ENCODE measurements at regions of chr22 and their contacts with region 1.

Region 1: GRCh38 chr22:22103078-22103875 is 120.7 kb upstream of the TOP3B start:
- DNase-seq: no peak
- ATAC-seq: 0 out of 3 replicates have a peak, but pooled peaks have one; percentile 18
- H3K4me3 ChIP-seq: no peak overlapping the region
- H3K27ac ChIP-seq: no peak overlapping the region
- H3K4me1 ChIP-seq: peaks cover 9% of the 10 kb centered on the region
- H3K27me3 ChIP-seq: no peaks in the 10 kb centered on the region
- CTCF ChIP-seq: peak; percentile 17 to 60 (median 30); a peak in 5 of 6 replicates
- EP300 ChIP-seq: no peak
- POLR2A ChIP-seq: no peak
- RAD21 ChIP-seq: no peak

Region 2: GRCh38 chr22:21098099-21098671 is 1005.1 kb before region 1 on chr22:
- CTCF ChIA-PET with region 1: no interaction called
- POLR2A ChIA-PET with region 1: interaction called, 10 read pairs
- RAD21 ChIA-PET with region 1: no interaction called
- SMC1A ChIA-PET with region 1: no interaction called
- in situ Hi-C with region 1: no loop called
- intact Hi-C with region 1: no loop called
- DNase-seq: no peak
- ATAC-seq: no peak; the same call in 2 of the 3 replicates
- H3K4me3 ChIP-seq: no peak overlapping the region
- H3K27ac ChIP-seq: no peak overlapping the region
- H3K4me1 ChIP-seq: no peaks in the 10 kb centered on the region
- H3K27me3 ChIP-seq: no peaks in the 10 kb centered on the region
- CTCF ChIP-seq: peak in 2 of 3 experiments; percentile 15 to 29; a peak in 2 of 6 replicates
- EP300 ChIP-seq: no peak
- POLR2A ChIP-seq: no peak
- RAD21 ChIP-seq: peak; percentile 19; the same call in 1 of the 2 replicates

Region 3: GRCh38 chr22:22003233-22003632 is 100.0 kb before region 1 on chr22:
- CTCF ChIA-PET with region 1: no interaction called
- POLR2A ChIA-PET with region 1: no interaction called
- RAD21 ChIA-PET with region 1: no interaction called
- SMC1A ChIA-PET with region 1: no interaction called
- in situ Hi-C with region 1: no loop called
- intact Hi-C with region 1: no loop called
- DNase-seq: no peak
- ATAC-seq: no peak
- H3K4me3 ChIP-seq: no peak overlapping the region
- H3K27ac ChIP-seq: no peak overlapping the region
- H3K4me1 ChIP-seq: no peaks in the 10 kb centered on the region
- H3K27me3 ChIP-seq: no peaks in the 10 kb centered on the region; a peak in 1 of 4 replicates
- CTCF ChIP-seq: no peak
- EP300 ChIP-seq: no peak
- POLR2A ChIP-seq: no peak
- RAD21 ChIP-seq: no peak

Region 4: DNA sequence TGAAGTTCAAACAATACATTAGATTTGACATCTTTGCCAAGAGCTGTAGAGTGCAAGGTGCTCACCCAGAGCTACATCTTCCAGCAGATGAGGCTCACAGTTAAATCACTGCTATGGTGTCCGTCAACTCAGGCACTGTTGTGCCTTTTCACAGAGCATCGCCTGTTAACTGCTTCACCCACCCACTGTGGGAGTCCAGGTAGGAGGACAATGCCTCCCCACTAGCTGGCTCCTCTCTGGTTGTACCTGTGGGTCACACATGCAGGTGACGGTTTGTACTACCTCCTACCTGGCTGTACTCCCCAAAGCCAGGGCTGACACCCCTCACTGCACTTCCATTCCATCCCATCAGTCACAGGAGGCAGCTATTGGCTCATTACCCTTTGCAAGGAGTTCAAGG is 36.1 kb before region 1 on chr22:
- CTCF ChIA-PET with region 1: interaction called, 104 read pairs
- POLR2A ChIA-PET with region 1: interaction called, 3 read pairs
- RAD21 ChIA-PET with region 1: interaction called, 50 read pairs
- SMC1A ChIA-PET with region 1: interaction called, 70 read pairs
- in situ Hi-C with region 1: no loop called
- intact Hi-C with region 1: no loop called
- DNase-seq: no peak
- ATAC-seq: no peak
- H3K4me3 ChIP-seq: no peak overlapping the region
- H3K27ac ChIP-seq: no peak overlapping the region
- H3K4me1 ChIP-seq: peaks cover 12% of the 10 kb centered on the region
- H3K27me3 ChIP-seq: no peaks in the 10 kb centered on the region
- CTCF ChIP-seq: no peak
- EP300 ChIP-seq: no peak
- POLR2A ChIP-seq: no peak
- RAD21 ChIP-seq: no peak

Region 5: GRCh38 chr22:22085702-22086500 is 17.4 kb before region 1 on chr22:
- CTCF ChIA-PET with region 1: interaction called, 6 read pairs
- POLR2A ChIA-PET with region 1: no interaction called
- RAD21 ChIA-PET with region 1: interaction called, 12 read pairs
- SMC1A ChIA-PET with region 1: interaction called, 27 read pairs
- in situ Hi-C with region 1: no loop called
- intact Hi-C with region 1: no loop called
- DNase-seq: no peak
- ATAC-seq: no peak
- H3K4me3 ChIP-seq: no peak overlapping the region
- H3K27ac ChIP-seq: no peak overlapping the region
- H3K4me1 ChIP-seq: no peaks in the 10 kb centered on the region
- H3K27me3 ChIP-seq: no peaks in the 10 kb centered on the region
- CTCF ChIP-seq: no peak
- EP300 ChIP-seq: no peak
- POLR2A ChIP-seq: no peak
- RAD21 ChIP-seq: no peak

Region 6: GRCh38 chr22:22138915-22139314 is 35.6 kb after region 1 on chr22:
- CTCF ChIA-PET with region 1: interaction called, 13 read pairs
- POLR2A ChIA-PET with region 1: no interaction called
- RAD21 ChIA-PET with region 1: interaction called, 3 read pairs
- SMC1A ChIA-PET with region 1: interaction called, 55 read pairs
- in situ Hi-C with region 1: no loop called
- intact Hi-C with region 1: no loop called
- DNase-seq: no peak
- ATAC-seq: no peak
- H3K4me3 ChIP-seq: no peak overlapping the region
- H3K27ac ChIP-seq: no peak overlapping the region
- H3K4me1 ChIP-seq: no peaks in the 10 kb centered on the region
- H3K27me3 ChIP-seq: no peaks in the 10 kb centered on the region
- CTCF ChIP-seq: no peak
- EP300 ChIP-seq: no peak
- POLR2A ChIP-seq: no peak
- RAD21 ChIP-seq: no peak

Region 7: GRCh38 chr22:22935546-22936157 is 832.4 kb after region 1 on chr22:
- CTCF ChIA-PET with region 1: no interaction called
- POLR2A ChIA-PET with region 1: interaction called, 3 read pairs
- RAD21 ChIA-PET with region 1: interaction called, 13 read pairs
- SMC1A ChIA-PET with region 1: no interaction called
- in situ Hi-C with region 1: no loop called
- intact Hi-C with region 1: no loop called
- DNase-seq: peak; percentile 99
- ATAC-seq: peak; percentile 84
- H3K4me3 ChIP-seq: peak overlapping the region; percentile 24; the same call in 1 of the 2 replicates
- H3K27ac ChIP-seq: peak overlapping the region; percentile 99
- H3K4me1 ChIP-seq: peaks cover 92% of the 10 kb centered on the region
- H3K27me3 ChIP-seq: no peaks in the 10 kb centered on the region
- CTCF ChIP-seq: peak; percentile 53 to 83 (median 71)
- EP300 ChIP-seq: peak; percentile 100
- POLR2A ChIP-seq: no peak; the same call in 1 of the 2 replicates
- RAD21 ChIP-seq: peak; percentile 75